ENCODE measurements at regions of chr1 and their contacts with region 1.

Region 1: DNA sequence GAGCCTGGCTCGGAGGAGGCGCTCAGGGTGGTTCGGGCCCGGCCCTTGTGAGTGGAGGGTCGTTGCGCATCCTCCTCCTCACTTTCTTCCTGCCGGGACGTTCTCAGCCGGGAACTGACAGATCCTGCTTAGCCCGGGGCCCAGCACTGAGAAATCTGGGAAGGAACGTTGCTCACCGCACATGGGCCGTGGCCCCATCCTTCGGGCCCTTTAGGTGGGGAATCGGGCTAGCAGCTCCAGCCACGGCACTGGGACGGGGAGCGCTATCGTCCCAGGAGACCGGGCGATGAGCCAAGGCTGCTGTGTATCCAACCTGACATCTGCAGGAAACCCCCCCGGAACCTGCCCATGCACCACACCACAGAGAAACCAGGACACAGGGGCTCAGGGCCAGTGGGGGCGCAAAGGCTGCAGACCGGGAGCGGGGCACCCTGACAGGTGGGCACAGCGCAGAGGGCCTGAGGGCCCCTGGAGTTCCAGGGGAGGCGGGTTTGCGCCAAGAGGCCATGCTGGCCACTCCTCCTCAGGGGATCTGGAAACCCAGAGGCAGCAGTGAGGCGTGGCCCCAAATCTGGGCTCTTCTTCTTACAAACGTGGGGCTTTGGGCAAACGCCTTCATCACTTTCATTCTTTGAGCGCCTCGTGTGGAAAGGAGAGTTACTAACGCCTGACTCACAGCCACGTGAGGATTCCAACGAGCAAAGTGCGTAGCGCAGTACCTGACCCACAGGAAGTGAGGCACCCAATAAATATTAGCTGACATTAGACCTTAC is at the start of gene SH2D5:
- DNase-seq: peak; percentile 57
- H3K4me3 Mint-ChIP-seq: peak within 1 kb of the TSS; percentile 86
- H3K27ac Mint-ChIP-seq: peak within 1 kb of the TSS; percentile 67
- H3K4me1 Mint-ChIP-seq: peaks cover 17% of the 10 kb centered on the region
- H3K27me3 Mint-ChIP-seq: peaks cover 29% of the 10 kb centered on the region
- total RNA-seq, gene SH2D5: 0.08 and 0.15 TPM in 2 replicates

Region 2: GRCh38 chr1:20507564-20508410 is 225.0 kb before region 1 on chr1 and contains the start of gene MUL1:
- intact Hi-C with region 1: loop called (anchors 2 kb)
- DNase-seq: peak; percentile 91
- H3K4me3 Mint-ChIP-seq: peak within 1 kb of the TSS; percentile 93
- H3K27ac Mint-ChIP-seq: peak within 1 kb of the TSS; percentile 93
- H3K4me1 Mint-ChIP-seq: peaks cover 11% of the 10 kb centered on the region
- H3K27me3 Mint-ChIP-seq: peaks cover 4% of the 10 kb centered on the region
- total RNA-seq, gene MUL1: 22.0 and 22.8 TPM in 2 replicates

Region 3: GRCh38 chr1:20696397-20697329 is 36.1 kb before region 1 on chr1:
- intact Hi-C with region 1: loop called (anchors 1 kb)
- DNase-seq: peak; percentile 51
- H3K4me3 Mint-ChIP-seq: peak overlapping the region; percentile 84
- H3K27ac Mint-ChIP-seq: no peak overlapping the region
- H3K4me1 Mint-ChIP-seq: peaks cover 12% of the 10 kb centered on the region
- H3K27me3 Mint-ChIP-seq: peaks cover 6% of the 10 kb centered on the region

Region 4: GRCh38 chr1:20786253-20787028 is 53.7 kb after region 1 on chr1:
- intact Hi-C with region 1: loop called (anchors 1 kb)
- DNase-seq: peak; percentile 95
- H3K4me3 Mint-ChIP-seq: peak overlapping the region; percentile 91
- H3K27ac Mint-ChIP-seq: peak overlapping the region; percentile 97
- H3K4me1 Mint-ChIP-seq: peaks cover 26% of the 10 kb centered on the region
- H3K27me3 Mint-ChIP-seq: peaks cover 5% of the 10 kb centered on the region

Region 5: GRCh38 chr1:21344750-21345443 is 612.1 kb after region 1 on chr1:
- intact Hi-C with region 1: loop called (anchors 2 kb)
- DNase-seq: no peak
- H3K4me3 Mint-ChIP-seq: peak overlapping the region; percentile 97
- H3K27ac Mint-ChIP-seq: peak overlapping the region; percentile 76
- H3K4me1 Mint-ChIP-seq: peaks cover 37% of the 10 kb centered on the region
- H3K27me3 Mint-ChIP-seq: no peaks in the 10 kb centered on the region

Measured in activated T-helper 1 cell treated with anti-CD3 and anti-CD28 coated beads, Interleukin-12 subunit alpha, Interleukin-12 subunit beta, Interleukin-2, Interleukin-4 antibody, amounts not matched to agents 30 ng/mL and 10 ng/mL and 1 ng/mL, durations not matched to agents 14 hours and 24 hours and 36 hours (primary cell).